HepG2 (cell line): ENCODE measurements at regions of chr6 and their contacts with region 1.

Region 1: DNA sequence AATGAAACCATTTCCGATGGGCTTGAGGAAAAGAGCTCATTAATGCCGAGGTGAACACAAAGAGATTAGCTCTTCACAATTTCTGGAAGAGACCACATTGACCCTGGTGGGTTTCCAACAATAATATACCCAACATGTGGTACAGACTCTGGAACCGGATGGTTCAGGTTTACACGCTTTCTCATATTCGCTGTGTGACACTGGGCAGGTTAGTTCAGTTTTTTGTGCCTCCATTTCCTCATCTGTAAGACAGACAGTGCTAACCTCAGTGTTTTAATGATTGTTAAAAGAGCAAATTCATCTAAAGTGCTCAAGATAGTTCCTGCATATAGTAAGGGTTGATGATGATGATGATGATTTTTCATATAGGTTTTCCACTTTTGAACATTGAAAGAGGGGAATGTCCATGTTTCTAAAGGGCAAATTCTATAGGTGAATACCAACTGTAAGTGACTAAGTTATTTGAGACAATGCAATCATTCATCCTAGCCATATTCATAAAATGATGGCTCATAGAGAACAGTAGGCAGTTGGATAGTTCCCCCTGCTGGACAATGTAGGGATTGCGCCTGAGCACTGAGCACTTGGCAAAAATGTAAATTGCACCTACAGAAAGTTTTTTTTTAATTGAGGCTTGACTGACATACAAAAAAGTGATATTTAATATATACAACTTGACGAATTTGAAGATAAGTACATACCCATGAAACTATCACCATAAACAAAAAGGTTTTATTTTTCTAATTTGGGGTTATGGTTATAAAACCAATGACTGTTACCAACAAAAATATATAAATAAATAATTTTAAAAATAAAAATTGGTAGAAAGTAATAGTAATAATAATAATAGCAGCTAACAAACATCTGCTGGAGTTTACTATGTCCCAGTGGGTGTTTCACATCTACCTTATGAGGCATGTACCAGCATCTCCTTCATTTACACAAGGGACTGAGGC is 2.1 kb upstream of the PERP start:
- DNase-seq: peak; percentile 64
- ATAC-seq: no peak
- H3K4me3 ChIP-seq: no peak overlapping the region
- H3K27ac ChIP-seq: no peak overlapping the region
- H3K4me1 ChIP-seq: peaks cover 28% of the 10 kb centered on the region
- H3K27me3 ChIP-seq: no peaks in the 10 kb centered on the region; a peak in 1 of 5 replicates
- CTCF ChIP-seq: peak; percentile 90
- EP300 ChIP-seq: no peak
- POLR2A ChIP-seq: no peak
- RAD21 ChIP-seq: peak; percentile 88

Region 2: GRCh38 chr6:137873273-137873762 is 236.0 kb before region 1 on chr6:
- CTCF ChIA-PET with region 1: no interaction called
- POLR2A ChIA-PET with region 1: no interaction called
- in situ Hi-C with region 1: no loop called
- intact Hi-C with region 1: loop called (anchors 5 kb)
- DNase-seq: peak; percentile 99
- ATAC-seq: peak; percentile 95
- H3K4me3 ChIP-seq: peak overlapping the region; percentile 9 to 100 (median 22); a peak in 2 of 6 replicates
- H3K27ac ChIP-seq: peak overlapping the region; percentile 50
- H3K4me1 ChIP-seq: peaks cover 69% of the 10 kb centered on the region
- H3K27me3 ChIP-seq: no peaks in the 10 kb centered on the region; a peak in 1 of 5 replicates
- CTCF ChIP-seq: no peak
- EP300 ChIP-seq: peak in 1 of 2 experiments; percentile 87; a peak in 3 of 4 replicates
- POLR2A ChIP-seq: no peak
- RAD21 ChIP-seq: no peak

Region 3: DNA sequence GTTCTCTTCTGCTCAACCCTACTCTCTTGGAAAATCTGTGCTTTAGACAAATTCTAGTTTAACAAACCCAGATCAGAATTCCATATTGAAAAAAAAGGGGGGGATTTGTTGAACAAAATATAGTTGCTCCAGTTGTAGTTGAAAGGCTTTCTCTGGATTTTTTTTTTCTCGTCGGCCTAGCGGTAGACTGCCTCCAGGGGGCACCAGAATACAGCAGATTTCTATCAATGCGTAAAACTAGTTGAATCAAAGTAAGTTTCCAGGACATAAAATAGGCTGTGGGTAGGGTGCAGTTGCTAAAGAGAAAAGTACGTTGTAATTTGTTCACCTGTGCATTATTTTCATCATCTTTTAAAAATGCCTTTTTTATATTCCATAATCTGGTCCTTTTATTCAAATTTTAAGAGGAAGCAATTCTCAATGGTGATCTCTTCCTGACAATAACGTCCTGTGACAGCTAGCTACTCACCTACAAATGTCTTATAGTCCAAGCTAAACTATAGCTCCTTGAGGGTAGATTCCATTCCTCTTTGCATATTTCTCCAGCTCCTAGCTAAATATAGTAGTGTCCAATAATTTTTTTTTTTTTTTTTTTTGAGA is 107.5 kb before region 1 on chr6:
- CTCF ChIA-PET with region 1: interaction called, 182 read pairs
- POLR2A ChIA-PET with region 1: interaction called, 9 read pairs
- in situ Hi-C with region 1: loop called (anchors 5 kb)
- intact Hi-C with region 1: loop called (anchors 1 kb)
- DNase-seq: peak; percentile 44
- ATAC-seq: peak; percentile 51
- H3K4me3 ChIP-seq: no peak overlapping the region
- H3K27ac ChIP-seq: no peak overlapping the region
- H3K4me1 ChIP-seq: 0 out of 2 replicates have a peak, but pooled peaks cover 6% of the 10 kb centered on the region
- H3K27me3 ChIP-seq: no peaks in the 10 kb centered on the region
- CTCF ChIP-seq: peak; percentile 88
- EP300 ChIP-seq: no peak
- POLR2A ChIP-seq: no peak
- RAD21 ChIP-seq: peak; percentile 87

Region 4: DNA sequence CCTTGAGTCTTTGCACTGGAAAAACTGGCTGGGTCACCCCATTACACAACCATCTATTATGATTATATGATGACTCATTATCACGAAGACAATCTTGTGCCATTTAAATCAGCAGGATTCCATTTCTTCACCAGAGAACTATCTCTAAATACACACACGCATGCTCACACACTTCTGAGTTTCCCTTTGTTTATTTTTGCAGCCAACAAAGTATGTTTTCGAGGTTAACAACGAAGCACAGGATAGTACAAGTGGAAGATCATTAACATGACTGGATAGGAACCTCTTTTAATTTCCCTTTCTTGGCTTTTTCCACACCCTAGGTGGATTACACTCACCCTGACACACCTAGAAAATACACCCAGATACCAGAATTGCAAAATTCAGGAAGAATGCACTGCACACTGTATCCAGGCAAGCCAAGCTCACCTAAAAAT is 21.0 kb before region 1 on chr6:
- CTCF ChIA-PET with region 1: interaction called, 4 read pairs
- POLR2A ChIA-PET with region 1: interaction called, 41 read pairs
- in situ Hi-C with region 1: no loop called
- intact Hi-C with region 1: loop called (anchors 1 kb)
- DNase-seq: peak; percentile 42
- ATAC-seq: no peak
- H3K4me3 ChIP-seq: no peak overlapping the region
- H3K27ac ChIP-seq: no peak overlapping the region
- H3K4me1 ChIP-seq: peaks cover 54% of the 10 kb centered on the region
- H3K27me3 ChIP-seq: no peaks in the 10 kb centered on the region
- CTCF ChIP-seq: no peak
- EP300 ChIP-seq: no peak
- POLR2A ChIP-seq: no peak
- RAD21 ChIP-seq: no peak

Region 5: GRCh38 chr6:138403801-138404661 is 294.7 kb after region 1 on chr6 and contains the start of gene HEBP2:
- CTCF ChIA-PET with region 1: interaction called, 5 read pairs
- POLR2A ChIA-PET with region 1: no interaction called
- in situ Hi-C with region 1: loop called (anchors 10 kb)
- intact Hi-C with region 1: loop called (anchors 5 kb)
- DNase-seq: peak; percentile 96
- ATAC-seq: peak; percentile 90
- H3K4me3 ChIP-seq: peak within 1 kb of the TSS; percentile 73 to 89 (median 84)
- H3K27ac ChIP-seq: peak within 1 kb of the TSS; percentile 55
- H3K4me1 ChIP-seq: peaks cover 19% of the 10 kb centered on the region
- H3K27me3 ChIP-seq: no peaks in the 10 kb centered on the region; a peak in 2 of 5 replicates
- CTCF ChIP-seq: peak; percentile 86
- EP300 ChIP-seq: peak; percentile 28 to 58; a peak in 3 of 4 replicates
- POLR2A ChIP-seq: peak; percentile 27 to 75; a peak in 3 of 4 replicates
- RAD21 ChIP-seq: peak; percentile 97
- total RNA-seq, gene HEBP2: 63.5 and 72.8 TPM in 2 replicates